Activated CD4-positive, alpha-beta T cell treated with anti-CD3 and anti-CD28 coated beads for 36 hours (primary cell): ENCODE measurements at regions of chr1 and their contacts with region 1.

Region 1: DNA sequence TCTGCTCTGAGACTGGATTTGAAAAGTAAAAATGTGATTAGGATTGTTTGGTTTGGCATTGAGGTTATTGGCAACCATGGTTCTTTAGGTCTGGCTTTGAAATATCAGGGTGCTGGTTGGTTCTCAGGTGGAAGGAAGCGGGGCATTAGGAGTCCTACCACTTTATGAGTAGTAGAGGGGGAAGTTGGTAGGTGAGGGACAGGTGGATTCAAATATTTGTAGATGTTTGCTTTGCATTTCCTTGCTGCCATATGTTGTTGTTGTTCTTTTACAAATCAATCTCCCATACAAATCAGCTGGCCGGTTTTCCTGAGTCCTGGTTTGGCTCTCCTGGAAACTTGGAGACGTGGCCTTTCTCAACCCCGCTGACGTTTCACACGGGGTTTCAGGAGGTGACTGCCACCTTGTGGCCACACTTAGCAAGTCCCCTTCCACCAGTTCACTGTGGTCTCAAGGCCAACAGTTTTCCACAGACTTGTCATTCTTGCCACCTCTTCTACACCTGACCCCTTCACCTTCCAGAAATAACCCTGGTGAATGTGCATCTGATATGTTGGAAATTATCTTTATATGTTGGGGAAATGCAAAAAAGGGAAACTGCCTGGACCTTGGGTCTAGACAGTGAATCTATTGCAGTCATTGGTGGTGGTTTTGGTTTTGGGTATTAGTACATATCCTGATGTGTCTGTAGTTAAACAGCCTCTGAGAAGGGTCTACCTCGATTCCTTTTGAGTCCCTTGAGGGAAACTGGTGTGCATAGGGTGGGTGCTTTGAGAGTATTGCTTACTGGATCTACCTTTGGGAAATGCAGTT is 127.0 kb upstream of the KIAA0040 start:
- DNase-seq: peak; percentile 82
- ATAC-seq: peak; percentile 89
- H3K4me3 Mint-ChIP-seq: no peak overlapping the region
- H3K27ac Mint-ChIP-seq: no peak overlapping the region
- H3K4me1 Mint-ChIP-seq: peaks cover 12% of the 10 kb centered on the region
- H3K27me3 Mint-ChIP-seq: peaks cover 2% of the 10 kb centered on the region

Region 2: DNA sequence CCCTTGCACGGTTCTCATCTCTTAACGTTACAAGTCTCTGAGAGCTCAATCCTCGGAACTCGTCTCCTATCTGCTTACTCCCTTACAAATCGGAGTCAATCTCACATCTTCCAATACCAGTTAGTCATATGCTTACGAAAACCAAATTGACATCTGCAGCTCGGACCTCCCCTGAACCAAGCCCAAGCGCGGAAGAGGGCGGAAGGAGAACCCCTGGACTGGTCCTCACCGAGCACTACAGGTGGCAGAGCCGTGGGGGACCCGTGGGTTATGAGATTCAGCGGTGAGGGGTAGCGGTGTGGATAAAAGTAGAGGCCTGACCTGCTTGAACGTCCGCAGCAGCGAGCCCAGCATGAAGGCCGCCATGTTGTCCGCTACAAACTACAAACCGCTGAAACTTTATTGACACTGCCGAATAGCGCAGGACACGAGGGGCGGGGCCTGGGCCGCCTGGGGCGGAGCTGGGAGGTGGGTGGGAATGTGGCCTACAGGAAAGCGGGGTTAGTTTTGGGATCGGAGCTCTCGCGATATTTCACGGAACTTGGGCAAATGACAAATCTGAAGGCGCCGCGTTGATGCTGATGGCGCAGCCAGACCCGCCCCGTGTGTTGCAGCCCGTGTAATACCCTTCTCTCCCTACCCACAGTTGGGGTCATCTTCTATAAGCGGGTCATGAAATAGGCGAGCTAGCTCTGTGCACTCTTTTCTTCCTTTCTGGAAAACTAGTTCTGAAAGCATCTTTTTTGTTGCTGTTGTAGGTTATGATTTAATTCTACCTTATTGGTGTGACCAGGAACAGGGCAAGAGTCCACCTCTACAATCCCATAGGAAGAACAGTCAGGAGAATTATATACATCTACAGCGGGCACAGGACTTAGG is 296.3 kb before region 1 on chr1 and contains the start of gene MRPS14:
- CTCF ChIA-PET with region 1: interaction called, 3 read pairs
- POLR2A ChIA-PET with region 1: no interaction called
- intact Hi-C with region 1: loop called in 1 of 2 experiments (anchors 2 kb)
- DNase-seq: peak; percentile 99
- ATAC-seq: peak; percentile 92
- H3K4me3 Mint-ChIP-seq: peak within 1 kb of the TSS; percentile 87
- H3K27ac Mint-ChIP-seq: peak within 1 kb of the TSS; percentile 92
- H3K4me1 Mint-ChIP-seq: peaks cover 25% of the 10 kb centered on the region
- H3K27me3 Mint-ChIP-seq: no peaks in the 10 kb centered on the region
- total RNA-seq, gene MRPS14: 38.7 to 43.7 TPM

Region 3: DNA sequence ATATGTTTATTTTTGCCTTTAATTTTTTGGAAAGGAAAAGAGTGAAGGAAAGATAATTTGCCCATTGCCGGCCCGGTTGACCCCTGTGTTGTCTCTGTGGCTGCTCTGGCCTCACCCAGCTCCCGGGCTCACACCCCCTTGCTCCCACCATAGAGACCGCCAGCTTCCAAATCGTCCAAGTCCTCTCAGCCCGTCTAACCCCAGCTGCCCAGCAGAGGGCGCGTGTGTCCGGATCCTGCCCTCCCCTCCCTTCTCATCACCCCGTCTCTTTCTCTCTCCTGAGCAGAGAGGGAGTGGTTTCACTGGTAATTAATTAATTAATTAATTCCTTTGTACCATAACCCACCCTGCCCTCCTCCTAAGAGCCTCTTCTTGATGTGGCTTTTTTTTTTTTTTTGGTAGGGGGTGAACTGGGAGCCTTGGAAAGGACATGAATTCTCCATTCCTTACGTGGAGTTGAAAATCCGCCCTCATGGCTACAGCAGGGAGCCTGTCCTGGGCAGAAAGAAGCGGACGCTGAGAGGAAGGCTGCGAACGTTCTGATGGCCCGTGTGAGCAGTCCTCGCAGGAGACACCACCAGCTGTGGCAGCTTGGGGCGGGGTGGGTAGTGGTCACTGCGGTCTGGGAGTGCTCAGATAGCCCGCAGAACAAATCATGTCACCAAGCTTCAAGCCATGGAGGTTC is 173.0 kb before region 1 on chr1:
- CTCF ChIA-PET with region 1: interaction called, 322 read pairs
- POLR2A ChIA-PET with region 1: interaction called, 4 read pairs
- intact Hi-C with region 1: no loop called
- DNase-seq: peak; percentile 84
- ATAC-seq: peak; percentile 89
- H3K4me3 Mint-ChIP-seq: no peak overlapping the region
- H3K27ac Mint-ChIP-seq: no peak overlapping the region
- H3K4me1 Mint-ChIP-seq: peaks cover 6% of the 10 kb centered on the region
- H3K27me3 Mint-ChIP-seq: peaks cover 15% of the 10 kb centered on the region

Region 4: GRCh38 chr1:175277783-175278736 is 41.6 kb before region 1 on chr1:
- CTCF ChIA-PET with region 1: no interaction called
- POLR2A ChIA-PET with region 1: no interaction called
- intact Hi-C with region 1: loop called in 1 of 2 experiments (anchors 1 kb)
- DNase-seq: no peak
- ATAC-seq: no peak
- H3K4me3 Mint-ChIP-seq: no peak overlapping the region
- H3K27ac Mint-ChIP-seq: no peak overlapping the region
- H3K4me1 Mint-ChIP-seq: no peaks in the 10 kb centered on the region
- H3K27me3 Mint-ChIP-seq: no peaks in the 10 kb centered on the region

Region 5: DNA sequence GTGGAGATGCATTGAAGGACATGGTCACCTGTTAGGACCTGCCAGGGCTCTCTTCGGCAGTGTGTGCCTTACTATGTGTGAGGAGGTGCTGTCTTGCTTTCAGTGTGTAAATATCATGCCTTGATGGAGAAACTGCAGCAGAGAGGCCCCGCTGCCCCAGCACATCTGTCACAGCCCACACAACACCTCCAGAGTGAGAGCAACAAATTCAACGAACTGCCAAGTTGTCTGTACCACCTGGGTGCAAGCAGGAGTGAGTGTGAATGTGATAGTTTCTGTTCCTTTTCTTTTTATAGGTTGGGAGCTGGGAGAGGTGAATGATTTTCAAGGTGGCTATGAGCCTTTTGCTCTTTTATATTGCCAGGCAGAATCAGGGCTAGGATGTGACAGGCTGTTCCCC is 12.5 kb before region 1 on chr1:
- CTCF ChIA-PET with region 1: interaction called, 47 read pairs
- POLR2A ChIA-PET with region 1: no interaction called
- intact Hi-C with region 1: no loop called
- DNase-seq: no peak
- ATAC-seq: no peak
- H3K4me3 Mint-ChIP-seq: no peak overlapping the region
- H3K27ac Mint-ChIP-seq: no peak overlapping the region
- H3K4me1 Mint-ChIP-seq: no peaks in the 10 kb centered on the region
- H3K27me3 Mint-ChIP-seq: no peaks in the 10 kb centered on the region

Region 6: GRCh38 chr1:175338387-175339135 is 18.9 kb after region 1 on chr1:
- CTCF ChIA-PET with region 1: interaction called, 26 read pairs
- POLR2A ChIA-PET with region 1: no interaction called
- intact Hi-C with region 1: no loop called
- DNase-seq: peak; percentile 82
- ATAC-seq: peak; percentile 97
- H3K4me3 Mint-ChIP-seq: no peak overlapping the region
- H3K27ac Mint-ChIP-seq: no peak overlapping the region
- H3K4me1 Mint-ChIP-seq: peaks cover 3% of the 10 kb centered on the region
- H3K27me3 Mint-ChIP-seq: peaks cover 15% of the 10 kb centered on the region

Region 7: DNA sequence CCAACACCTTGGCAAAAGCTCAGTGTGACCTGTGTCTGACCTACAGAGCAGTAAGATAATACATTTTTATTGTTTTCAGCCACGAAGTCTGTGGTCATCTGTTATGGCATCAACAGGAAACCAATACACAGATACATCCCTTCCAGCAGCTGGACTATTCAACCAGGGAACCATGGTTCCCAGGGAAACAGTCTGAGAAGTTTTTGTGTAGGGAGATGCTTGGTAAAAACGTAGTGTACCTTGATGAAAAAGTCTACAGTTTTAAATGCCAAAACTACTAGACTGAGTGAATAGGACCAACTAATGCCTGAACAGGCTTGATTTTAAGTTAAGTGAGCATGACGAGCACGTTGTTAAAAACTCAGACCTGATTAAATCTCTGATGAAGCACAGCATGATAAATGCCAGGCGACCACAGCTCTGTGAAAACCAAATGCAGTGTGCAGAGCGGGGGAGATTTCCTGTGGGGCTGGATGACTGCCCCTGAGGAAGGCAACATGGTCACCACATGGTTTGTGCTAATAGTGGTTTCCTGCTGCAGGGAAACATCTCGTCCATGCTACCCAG is 194.8 kb after region 1 on chr1:
- CTCF ChIA-PET with region 1: no interaction called
- POLR2A ChIA-PET with region 1: no interaction called
- intact Hi-C with region 1: no loop called
- DNase-seq: peak; percentile 42
- ATAC-seq: peak; percentile 76
- H3K4me3 Mint-ChIP-seq: no peak overlapping the region
- H3K27ac Mint-ChIP-seq: no peak overlapping the region
- H3K4me1 Mint-ChIP-seq: no peaks in the 10 kb centered on the region
- H3K27me3 Mint-ChIP-seq: peaks cover 34% of the 10 kb centered on the region